Dorsolateral prefrontal cortex (tissue), 120 donors: ENCODE measurements at regions of chr7 and their contacts with region 1.

Region 1: GRCh38 chr7:111867348-111867931 is 305.1 kb upstream of the IMMP2L start:
- DNase-seq: no peak
- H3K4me3 ChIP-seq: no peak overlapping the region
- H3K27ac ChIP-seq: peak overlapping the region in 3 of 59 donors; percentile 1 to 23 (median 12)
- H3K27me3 ChIP-seq: no peaks in the 10 kb centered on the region
- CTCF ChIP-seq: no peak

Region 2: DNA sequence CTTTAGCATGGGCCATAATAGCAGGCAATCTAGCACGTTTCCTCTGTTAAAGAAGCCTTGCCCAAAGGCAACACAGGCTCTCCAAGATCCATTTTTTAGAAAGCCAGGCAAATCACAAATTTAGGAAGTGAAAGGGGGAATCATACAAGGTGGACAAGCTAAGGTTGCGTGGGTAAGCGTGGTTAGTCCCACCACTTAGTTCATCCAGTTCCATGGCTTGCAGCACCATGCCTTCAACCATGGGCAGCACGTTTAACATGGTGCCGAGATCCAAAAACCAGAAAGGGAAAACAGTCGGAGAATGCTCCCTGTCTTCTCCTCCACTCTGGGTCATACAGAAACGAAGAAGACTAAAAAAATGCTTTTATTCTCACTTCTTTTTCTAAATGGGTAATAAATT is 70.8 kb before region 1 on chr7:
- intact Hi-C with region 1: no loop called
- DNase-seq: no peak
- H3K4me3 ChIP-seq: no peak overlapping the region
- H3K27ac ChIP-seq: no peak overlapping the region
- H3K27me3 ChIP-seq: no peaks in the 10 kb centered on the region
- CTCF ChIP-seq: no peak

Region 3: DNA sequence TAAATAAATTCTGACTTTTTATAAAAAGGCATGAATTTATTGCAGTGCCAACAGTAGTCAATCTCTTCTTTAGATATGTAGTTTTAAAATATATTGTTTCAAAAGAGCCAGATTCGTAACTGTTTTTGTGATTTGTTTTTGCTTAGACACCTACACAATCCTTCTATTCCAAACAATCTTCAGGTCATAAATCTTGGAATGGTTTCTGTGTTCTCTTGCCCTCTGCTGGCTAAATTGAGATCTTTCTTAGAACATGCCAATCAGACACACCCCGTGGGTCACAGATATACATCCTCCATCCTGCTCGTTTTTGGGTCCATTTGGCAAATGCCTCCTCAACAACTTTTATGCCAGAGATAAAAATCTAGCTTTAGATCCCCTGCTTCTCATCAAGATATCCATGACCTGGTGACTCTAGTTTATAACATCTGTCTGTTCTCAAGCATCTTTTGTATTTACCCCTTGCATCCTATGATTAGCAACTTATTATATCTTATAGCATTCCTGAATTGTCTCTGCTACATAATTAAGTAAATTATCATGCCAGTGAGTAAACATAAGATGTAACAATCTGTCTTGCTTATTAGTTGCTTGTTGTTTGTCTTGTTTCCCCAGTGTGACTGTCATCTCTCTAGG is 547.5 kb after region 1 on chr7:
- intact Hi-C with region 1: loop called in 1 of 2 experiments (anchors 10 kb)
- DNase-seq: no peak
- H3K4me3 ChIP-seq: no peak overlapping the region
- H3K27ac ChIP-seq: no peak overlapping the region
- H3K27me3 ChIP-seq: no peaks in the 10 kb centered on the region
- CTCF ChIP-seq: peak; percentile 27 to 76 (median 60)